Caco-2 (cell line): ENCODE measurements at regions of chr6 and their contacts with region 1.

Region 1: DNA sequence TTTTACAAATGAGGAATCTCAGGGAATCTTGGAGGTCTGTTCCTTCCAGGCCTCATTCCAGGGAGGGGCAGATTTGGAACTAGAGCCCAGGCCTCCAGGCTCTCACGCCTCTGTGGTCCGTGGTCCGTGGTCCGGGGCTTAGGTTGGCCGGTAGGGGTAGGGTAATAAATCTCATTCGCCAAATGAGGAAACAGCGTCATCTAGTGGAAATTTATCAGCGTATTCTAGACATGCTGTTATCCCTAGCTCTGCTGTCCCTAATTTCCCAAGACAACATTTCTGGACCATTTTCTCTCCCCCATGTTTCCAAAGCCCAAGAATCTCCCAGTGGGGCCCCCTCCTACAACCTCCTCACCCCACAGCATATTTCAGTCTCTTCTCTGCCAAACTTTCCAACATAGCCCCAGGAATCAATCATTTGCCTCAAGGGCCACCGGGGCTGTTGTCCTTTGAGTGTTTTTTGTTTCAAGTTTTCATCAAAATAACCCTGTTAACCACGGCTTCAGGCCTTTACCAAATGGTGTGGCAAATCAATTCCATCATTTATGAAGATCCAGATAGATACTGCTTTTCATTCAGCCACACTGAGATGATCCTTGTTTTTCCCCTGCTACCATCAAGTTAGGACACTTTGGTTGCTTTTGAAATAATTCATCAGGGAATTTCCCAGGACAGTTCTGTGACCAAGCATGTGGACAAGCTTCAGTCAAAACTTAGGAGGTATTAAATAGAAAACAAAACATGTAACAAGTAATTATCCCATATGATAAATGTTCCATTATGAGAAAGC is 126.8 kb downstream of the ALDH8A1 start:
- DNase-seq: peak; percentile 49 to 73
- H3K4me3 ChIP-seq: no peak overlapping the region
- H3K4me3 Mint-ChIP-seq: no peak overlapping the region
- H3K27ac Mint-ChIP-seq: no peak overlapping the region
- H3K4me1 ChIP-seq: 0 out of 2 replicates have a peak, but pooled peaks cover 6% of the 10 kb centered on the region
- H3K4me1 Mint-ChIP-seq: peaks cover 23% of the 10 kb centered on the region
- H3K27me3 ChIP-seq: no peaks in the 10 kb centered on the region
- H3K27me3 Mint-ChIP-seq: no peaks in the 10 kb centered on the region
- CTCF ChIP-seq: peak; percentile 84 to 87

Region 2: GRCh38 chr6:133817460-133818047 is 1005.6 kb before region 1 on chr6:
- CTCF ChIA-PET with region 1: no interaction called
- POLR2A ChIA-PET with region 1: no interaction called
- intact Hi-C with region 1: no loop called
- DNase-seq: peak; percentile 38 to 60
- H3K4me3 ChIP-seq: no peak overlapping the region
- H3K4me3 Mint-ChIP-seq: no peak overlapping the region
- H3K27ac Mint-ChIP-seq: no peak overlapping the region
- H3K4me1 ChIP-seq: no peaks in the 10 kb centered on the region
- H3K4me1 Mint-ChIP-seq: no peaks in the 10 kb centered on the region
- H3K27me3 ChIP-seq: no peaks in the 10 kb centered on the region
- H3K27me3 Mint-ChIP-seq: peaks cover 6% of the 10 kb centered on the region
- CTCF ChIP-seq: peak; percentile 67 to 83

Region 3: GRCh38 chr6:134111062-134111677 is 711.9 kb before region 1 on chr6:
- CTCF ChIA-PET with region 1: no interaction called
- POLR2A ChIA-PET with region 1: no interaction called
- intact Hi-C with region 1: loop called (anchors 1 kb)
- DNase-seq: peak in 1 of 2 experiments; percentile 58
- H3K4me3 ChIP-seq: no peak overlapping the region
- H3K4me3 Mint-ChIP-seq: no peak overlapping the region
- H3K27ac Mint-ChIP-seq: no peak overlapping the region
- H3K4me1 ChIP-seq: peaks cover under 1% of the 10 kb centered on the region; the same call in 1 of the 2 replicates
- H3K4me1 Mint-ChIP-seq: no peaks in the 10 kb centered on the region
- H3K27me3 ChIP-seq: no peaks in the 10 kb centered on the region
- H3K27me3 Mint-ChIP-seq: peaks cover 3% of the 10 kb centered on the region
- CTCF ChIP-seq: peak; percentile 75 to 80

Region 4: DNA sequence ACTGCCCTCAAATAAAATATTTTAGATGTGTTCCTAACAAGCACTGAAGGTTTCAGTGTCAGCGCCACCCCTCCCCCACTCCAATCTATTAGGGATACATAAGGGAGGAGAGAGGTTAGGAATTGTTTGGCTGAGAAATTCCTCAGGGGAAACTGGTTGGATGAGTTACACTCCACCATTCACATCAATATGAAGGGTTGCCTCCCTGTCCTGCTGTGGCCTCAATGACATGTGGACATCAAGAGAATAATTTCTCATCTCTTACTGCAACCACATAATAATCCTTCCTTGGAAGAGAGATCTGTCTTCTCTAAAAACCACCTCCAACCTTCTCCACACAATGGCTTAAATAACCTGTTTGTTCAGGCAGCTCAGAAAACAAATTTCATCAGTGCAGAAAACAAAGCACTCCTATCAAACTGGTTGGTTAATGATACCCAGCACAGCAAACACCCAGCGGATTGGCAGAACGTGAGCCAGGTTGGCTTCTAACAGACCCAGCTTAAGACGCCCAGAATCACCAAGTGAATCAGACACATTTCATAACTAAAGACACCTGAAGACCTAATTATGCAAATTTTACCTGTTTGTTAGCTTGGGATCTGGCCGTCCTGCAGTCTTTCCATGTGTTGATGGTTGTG is 369.1 kb before region 1 on chr6:
- CTCF ChIA-PET with region 1: no interaction called
- POLR2A ChIA-PET with region 1: no interaction called
- intact Hi-C with region 1: loop called (anchors 10 kb)
- DNase-seq: peak; percentile 63 to 67
- H3K4me3 ChIP-seq: no peak overlapping the region
- H3K4me3 Mint-ChIP-seq: peak overlapping the region; percentile 42
- H3K27ac Mint-ChIP-seq: peak overlapping the region; percentile 15
- H3K4me1 ChIP-seq: peaks cover 24% of the 10 kb centered on the region
- H3K4me1 Mint-ChIP-seq: peaks cover 18% of the 10 kb centered on the region
- H3K27me3 ChIP-seq: no peaks in the 10 kb centered on the region
- H3K27me3 Mint-ChIP-seq: no peaks in the 10 kb centered on the region
- CTCF ChIP-seq: no peak

Region 5: DNA sequence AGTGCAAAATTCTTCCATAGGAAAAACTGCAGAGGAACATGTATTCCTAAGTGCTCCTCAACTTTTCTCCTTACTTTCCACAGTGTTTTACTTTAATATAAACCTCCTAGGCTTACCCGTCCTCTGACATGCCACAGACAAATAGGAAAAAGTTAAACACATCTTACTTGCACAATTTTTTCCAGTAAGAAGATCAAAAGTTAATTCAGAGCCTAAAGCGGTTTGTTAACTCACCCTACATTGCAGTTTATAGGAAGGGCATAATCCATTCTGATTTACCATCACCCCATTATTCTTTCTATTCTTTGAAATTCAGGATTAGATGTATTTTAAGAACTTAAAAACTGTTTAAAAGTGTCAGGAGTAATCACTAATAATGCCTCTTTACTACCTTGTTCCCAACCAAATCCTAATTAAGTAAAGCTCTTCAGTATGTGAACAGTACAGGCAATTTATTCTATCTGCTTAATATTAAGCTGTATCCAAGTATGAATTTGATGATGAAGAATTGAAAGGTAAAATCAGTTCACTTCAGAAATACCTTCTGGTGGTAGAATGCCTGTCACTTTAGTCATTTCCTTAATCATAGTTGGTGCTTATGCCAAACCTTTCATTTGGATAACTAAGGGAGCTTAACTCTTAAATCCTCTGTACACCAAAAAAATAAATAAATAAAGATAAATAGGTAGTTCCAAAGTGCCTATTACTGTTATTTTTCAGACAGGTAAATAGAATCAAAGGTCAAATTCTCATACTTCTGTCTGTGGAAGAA is 165.2 kb before region 1 on chr6:
- CTCF ChIA-PET with region 1: interaction called, 4 read pairs
- POLR2A ChIA-PET with region 1: no interaction called
- intact Hi-C with region 1: loop called (anchors 5 kb)
- DNase-seq: no peak
- H3K4me3 ChIP-seq: no peak overlapping the region
- H3K4me3 Mint-ChIP-seq: no peak overlapping the region
- H3K27ac Mint-ChIP-seq: no peak overlapping the region
- H3K4me1 ChIP-seq: peaks cover 29% of the 10 kb centered on the region
- H3K4me1 Mint-ChIP-seq: peaks cover 13% of the 10 kb centered on the region
- H3K27me3 ChIP-seq: no peaks in the 10 kb centered on the region
- H3K27me3 Mint-ChIP-seq: no peaks in the 10 kb centered on the region
- CTCF ChIP-seq: no peak

Region 6: GRCh38 chr6:134949927-134950326 is 126.8 kb after region 1 on chr6 and contains the start of gene ALDH8A1:
- CTCF ChIA-PET with region 1: no interaction called
- POLR2A ChIA-PET with region 1: no interaction called
- intact Hi-C with region 1: loop called (anchors 10 kb)
- DNase-seq: no peak
- H3K4me3 ChIP-seq: no peak within 1 kb of the TSS
- H3K4me3 Mint-ChIP-seq: no peak within 1 kb of the TSS
- H3K27ac Mint-ChIP-seq: no peak within 1 kb of the TSS
- H3K4me1 ChIP-seq: no peaks in the 10 kb centered on the region
- H3K4me1 Mint-ChIP-seq: no peaks in the 10 kb centered on the region
- H3K27me3 ChIP-seq: no peaks in the 10 kb centered on the region
- H3K27me3 Mint-ChIP-seq: no peaks in the 10 kb centered on the region
- CTCF ChIP-seq: no peak
- total RNA-seq, gene ALDH8A1: 0.21 and 0.29 TPM in 2 replicates